ENCODE measurements at regions of chr11 and their contacts with region 1.

Region 1: GRCh38 chr11:48161951-48162884 is 54.4 kb upstream of the OR4B1 start:
- DNase-seq: no peak
- ATAC-seq: no peak
- H3K4me3 Mint-ChIP-seq: no peak overlapping the region
- H3K27ac Mint-ChIP-seq: peak overlapping the region; percentile 17
- H3K4me1 Mint-ChIP-seq: no peaks in the 10 kb centered on the region
- H3K27me3 Mint-ChIP-seq: no peaks in the 10 kb centered on the region
- CTCF ChIP-seq: no peak

Region 2: DNA sequence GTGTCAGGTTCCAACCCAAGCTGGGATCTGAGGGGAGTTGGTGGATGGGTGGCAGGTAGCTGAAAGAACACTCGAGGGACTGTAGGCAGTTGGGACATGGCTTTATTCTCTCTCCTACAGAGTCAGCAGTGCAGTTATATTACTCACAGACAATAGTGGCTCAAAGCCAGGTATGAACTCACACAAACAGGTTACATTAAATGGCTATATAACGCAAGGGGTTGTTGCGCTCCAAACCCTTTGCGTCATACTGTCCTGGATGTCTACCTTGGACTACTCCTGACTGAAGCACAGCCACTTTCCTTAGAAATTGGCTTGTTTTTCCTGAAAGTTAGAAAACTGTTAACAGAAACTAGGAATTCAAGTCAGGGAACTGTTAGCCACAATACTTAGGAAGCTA is 12.0 kb before region 1 on chr11:
- CTCF ChIA-PET with region 1: no interaction called
- POLR2A ChIA-PET with region 1: no interaction called
- intact Hi-C with region 1: no loop called
- DNase-seq: no peak
- ATAC-seq: no peak
- H3K4me3 Mint-ChIP-seq: no peak overlapping the region
- H3K27ac Mint-ChIP-seq: no peak overlapping the region
- H3K4me1 Mint-ChIP-seq: no peaks in the 10 kb centered on the region
- H3K27me3 Mint-ChIP-seq: no peaks in the 10 kb centered on the region
- CTCF ChIP-seq: no peak

Region 3: DNA sequence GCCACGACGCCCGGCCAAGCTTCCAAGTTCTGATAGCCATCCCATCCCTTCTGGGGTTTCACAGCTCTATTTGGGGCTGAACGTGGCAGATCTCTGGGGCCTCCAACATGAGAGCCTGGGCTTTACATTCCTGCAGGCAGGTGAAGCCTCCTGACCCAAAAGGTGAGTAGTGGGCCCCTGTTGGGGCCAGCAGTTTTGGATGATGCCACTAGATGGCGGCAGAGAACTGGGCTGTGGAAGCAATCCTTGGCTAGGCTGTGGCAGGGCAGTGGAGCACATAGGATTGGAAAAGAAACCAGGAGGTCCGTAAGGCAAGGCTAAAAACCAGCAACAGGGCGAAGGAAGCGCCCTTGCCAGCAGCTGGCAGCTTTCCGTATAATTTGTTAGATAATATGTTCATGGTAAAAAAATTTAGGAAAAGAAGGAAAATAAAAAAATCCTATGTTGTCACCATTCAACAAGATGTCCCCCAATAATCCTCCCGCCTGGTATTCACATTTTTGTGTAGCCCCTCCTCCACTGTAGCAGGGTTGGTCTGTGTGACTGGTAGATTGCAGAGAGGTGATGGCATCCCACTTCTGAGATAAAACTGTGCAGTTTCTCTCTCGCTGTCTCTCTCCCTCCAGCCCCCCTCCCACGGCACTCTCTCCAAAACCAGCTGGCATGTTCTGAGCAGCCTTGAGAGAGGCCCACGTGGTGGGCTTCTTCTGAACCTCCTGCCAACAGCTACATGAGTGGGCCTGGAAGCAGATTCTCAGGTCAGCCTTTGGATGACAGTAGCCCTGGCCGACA is 10.8 kb after region 1 on chr11:
- CTCF ChIA-PET with region 1: interaction called, 19 read pairs
- POLR2A ChIA-PET with region 1: no interaction called
- intact Hi-C with region 1: no loop called
- DNase-seq: peak; percentile 76
- ATAC-seq: peak; percentile 83
- H3K4me3 Mint-ChIP-seq: no peak overlapping the region
- H3K27ac Mint-ChIP-seq: no peak overlapping the region
- H3K4me1 Mint-ChIP-seq: peaks cover 12% of the 10 kb centered on the region
- H3K27me3 Mint-ChIP-seq: no peaks in the 10 kb centered on the region
- CTCF ChIP-seq: peak; percentile 86